ENCODE measurements at regions of chr9 and their contacts with region 1.

Region 1: DNA sequence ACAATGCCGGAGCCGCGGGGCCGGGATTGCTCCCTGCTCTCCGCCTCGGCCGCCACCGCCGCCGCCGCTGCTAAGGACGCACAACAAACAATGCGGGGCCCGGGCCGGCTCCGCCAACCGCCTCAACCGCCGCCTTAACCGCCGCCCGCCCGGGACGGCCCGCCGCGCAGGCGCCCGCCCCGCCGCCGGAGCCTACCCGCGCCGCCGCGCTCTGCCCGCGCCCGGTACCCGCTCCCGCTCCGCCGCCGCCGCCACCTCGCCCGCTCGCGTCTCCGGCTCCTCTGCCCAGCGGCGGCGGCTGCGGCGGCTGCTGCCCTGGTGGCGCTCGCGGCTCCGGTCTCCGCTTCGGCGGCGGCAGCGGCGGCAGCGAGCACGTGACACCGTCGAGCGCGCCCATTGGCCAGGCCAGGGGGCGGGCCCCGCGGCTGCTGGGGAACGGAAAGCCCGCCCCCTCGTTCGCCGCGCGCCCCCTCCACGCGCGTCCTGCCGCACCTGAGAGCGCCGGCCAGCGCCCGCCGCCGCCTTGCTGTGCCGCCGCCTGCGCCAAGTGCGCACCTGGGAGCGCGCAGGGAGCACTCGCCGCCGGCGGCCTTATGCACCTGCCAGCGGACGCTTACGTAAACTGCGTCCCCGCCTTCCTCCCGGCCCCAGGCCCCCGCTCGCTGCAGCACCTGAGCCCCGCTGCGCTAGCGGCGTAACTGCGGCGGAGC is at the start of gene STRBP:
- DNase-seq: peak; percentile 92 to 95 (median 93)
- ATAC-seq: peak; percentile 94 to 98 (median 97)
- H3K4me3 ChIP-seq: peak within 1 kb of the TSS; percentile 64 to 97 (median 86)
- H3K27ac ChIP-seq: peak within 1 kb of the TSS in 11 of 12 donors; percentile 67 to 84 (median 74)
- H3K4me1 ChIP-seq: peaks cover 0 to 22% (median 5%) of the 10 kb centered on the region in 12 donors
- H3K27me3 ChIP-seq: no peaks in the 10 kb centered on the region
- CTCF ChIP-seq: peak in 2 of 12 donors; percentile 5 to 15
- POLR2A ChIP-seq: peak in 1 of 2 donors; percentile 55
- total RNA-seq, gene STRBP: 8.3 to 24.4 (median 18.7) TPM

Region 2: GRCh38 chr9:122904823-122905710 is 363.3 kb before region 1 on chr9 and contains the start of gene RC3H2:
- intact Hi-C with region 1: loop called in 1 of 10 experiments (anchors 10 kb)
- DNase-seq: peak; percentile 97 to 99 (median 99)
- ATAC-seq: peak; percentile 98 to 99 (median 99)
- H3K4me3 ChIP-seq: peak within 1 kb of the TSS; percentile 75 to 93 (median 86)
- H3K27ac ChIP-seq: peak within 1 kb of the TSS; percentile 87 to 98 (median 96)
- H3K4me1 ChIP-seq: peaks cover 3 to 44% (median 29%) of the 10 kb centered on the region in 12 donors
- H3K27me3 ChIP-seq: no peaks in the 10 kb centered on the region
- CTCF ChIP-seq: peak in 1 of 12 donors; percentile 8
- POLR2A ChIP-seq: peak; percentile 90 to 98
- total RNA-seq, gene RC3H2: 36.2 to 52.2 (median 45.4) TPM

Region 3: GRCh38 chr9:123176949-123177348 is 91.4 kb before region 1 on chr9:
- intact Hi-C with region 1: no loop called
- DNase-seq: no peak
- ATAC-seq: peak in 3 of 4 donors; percentile 37 to 65 (median 59)
- H3K4me3 ChIP-seq: no peak overlapping the region
- H3K27ac ChIP-seq: no peak overlapping the region
- H3K4me1 ChIP-seq: peaks cover 0 to 18% (median 1%) of the 10 kb centered on the region in 12 donors
- H3K27me3 ChIP-seq: no peaks in the 10 kb centered on the region
- CTCF ChIP-seq: no peak
- POLR2A ChIP-seq: no peak

Region 4: GRCh38 chr9:123414946-123415821 is 146.8 kb after region 1 on chr9:
- intact Hi-C with region 1: no loop called
- DNase-seq: no peak
- ATAC-seq: no peak
- H3K4me3 ChIP-seq: no peak overlapping the region
- H3K27ac ChIP-seq: no peak overlapping the region
- H3K4me1 ChIP-seq: no peaks in the 10 kb centered on the region
- H3K27me3 ChIP-seq: no peaks in the 10 kb centered on the region
- CTCF ChIP-seq: no peak
- POLR2A ChIP-seq: no peak